IMR-90 (cell line): ENCODE measurements at regions of chr2 and their contacts with region 1.

Region 1: DNA sequence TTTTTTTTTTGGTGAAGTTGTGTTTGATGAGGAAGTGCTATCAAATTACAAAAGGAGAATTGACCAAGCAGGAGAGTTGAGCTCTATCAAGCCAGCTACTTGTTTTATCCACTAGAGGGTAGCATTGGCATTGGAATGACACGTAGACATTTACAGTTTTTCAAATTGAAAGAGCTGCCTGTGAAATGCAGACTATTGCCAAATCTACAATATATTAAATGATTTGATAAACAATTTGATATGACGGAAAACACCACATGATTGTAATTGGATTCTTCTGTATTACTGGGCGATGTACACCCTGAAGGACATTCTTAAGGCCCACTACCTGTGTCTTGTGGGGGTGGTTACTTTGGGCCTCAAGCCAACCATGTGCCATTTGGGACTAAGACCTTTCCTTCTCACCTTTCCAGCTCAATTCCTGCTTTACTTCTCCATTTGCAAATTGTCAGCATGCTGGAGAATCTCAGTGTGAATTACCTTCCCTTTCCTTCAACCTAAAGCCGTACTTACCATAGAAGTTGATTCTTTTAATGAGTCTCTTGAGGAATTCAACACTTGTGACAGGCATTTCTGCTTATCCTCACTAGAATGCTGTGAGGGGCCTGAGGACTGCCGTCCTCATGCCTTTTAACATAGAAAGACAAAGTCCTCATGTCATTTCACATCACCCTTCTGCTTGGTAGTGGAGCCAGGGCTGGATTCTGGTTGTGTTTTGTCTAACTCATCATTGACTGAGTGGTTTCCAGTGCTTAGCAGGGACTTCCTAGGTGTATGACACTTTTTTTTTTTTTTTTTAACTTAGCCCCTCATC is 134.8 kb upstream of the THUMPD2 start:
- DNase-seq: peak; percentile 88
- ATAC-seq: peak; percentile 85
- H3K4me3 ChIP-seq: no peak overlapping the region
- H3K27ac ChIP-seq: peak overlapping the region; percentile 94
- H3K4me1 ChIP-seq: peaks cover 5% of the 10 kb centered on the region
- H3K27me3 ChIP-seq: no peaks in the 10 kb centered on the region
- CTCF ChIP-seq: peak; percentile 90
- POLR2A ChIP-seq: 0 out of 2 replicates have a peak, but pooled peaks have one; percentile 37
- RAD21 ChIP-seq: peak; percentile 99

Region 2: GRCh38 chr2:40127890-40128557 is 214.2 kb after region 1 on chr2:
- CTCF ChIA-PET with region 1: no interaction called
- POLR2A ChIA-PET with region 1: no interaction called
- dilution Hi-C with region 1: no loop called
- in situ Hi-C with region 1: no loop called
- intact Hi-C with region 1: loop called (anchors 1 kb)
- DNase-seq: peak; percentile 97
- ATAC-seq: peak; percentile 79
- H3K4me3 ChIP-seq: no peak overlapping the region
- H3K27ac ChIP-seq: peak overlapping the region; percentile 97
- H3K4me1 ChIP-seq: peaks cover 43% of the 10 kb centered on the region
- H3K27me3 ChIP-seq: no peaks in the 10 kb centered on the region
- CTCF ChIP-seq: no peak
- POLR2A ChIP-seq: no peak
- RAD21 ChIP-seq: peak; percentile 14; the same call in 1 of the 2 replicates

Region 3: GRCh38 chr2:40332191-40332826 is 418.5 kb after region 1 on chr2:
- CTCF ChIA-PET with region 1: no interaction called
- POLR2A ChIA-PET with region 1: no interaction called
- dilution Hi-C with region 1: no loop called
- in situ Hi-C with region 1: no loop called
- intact Hi-C with region 1: no loop called
- DNase-seq: peak; percentile 86
- ATAC-seq: peak; percentile 84
- H3K4me3 ChIP-seq: no peak overlapping the region
- H3K27ac ChIP-seq: peak overlapping the region; percentile 46; the same call in 1 of the 2 replicates
- H3K4me1 ChIP-seq: peaks cover 3% of the 10 kb centered on the region; the same call in 1 of the 2 replicates
- H3K27me3 ChIP-seq: no peaks in the 10 kb centered on the region
- CTCF ChIP-seq: no peak
- POLR2A ChIP-seq: no peak
- RAD21 ChIP-seq: no peak

Region 4: GRCh38 chr2:40363631-40364030 is 449.8 kb after region 1 on chr2:
- CTCF ChIA-PET with region 1: no interaction called
- POLR2A ChIA-PET with region 1: no interaction called
- dilution Hi-C with region 1: no loop called
- in situ Hi-C with region 1: no loop called
- intact Hi-C with region 1: loop called (anchors 5 kb)
- DNase-seq: peak; percentile 40
- ATAC-seq: no peak
- H3K4me3 ChIP-seq: peak overlapping the region; percentile 3; the same call in 1 of the 2 replicates
- H3K27ac ChIP-seq: peak overlapping the region; percentile 69; the same call in 1 of the 2 replicates
- H3K4me1 ChIP-seq: peaks cover 15% of the 10 kb centered on the region
- H3K27me3 ChIP-seq: no peaks in the 10 kb centered on the region
- CTCF ChIP-seq: no peak
- POLR2A ChIP-seq: no peak
- RAD21 ChIP-seq: no peak

Region 5: GRCh38 chr2:40760071-40760666 is 846.3 kb after region 1 on chr2:
- CTCF ChIA-PET with region 1: no interaction called
- POLR2A ChIA-PET with region 1: no interaction called
- dilution Hi-C with region 1: no loop called
- in situ Hi-C with region 1: loop called (anchors 5 kb)
- intact Hi-C with region 1: loop called (anchors 1 kb)
- DNase-seq: peak; percentile 69
- ATAC-seq: peak; percentile 99
- H3K4me3 ChIP-seq: no peak overlapping the region
- H3K27ac ChIP-seq: no peak overlapping the region
- H3K4me1 ChIP-seq: no peaks in the 10 kb centered on the region
- H3K27me3 ChIP-seq: no peaks in the 10 kb centered on the region
- CTCF ChIP-seq: peak; percentile 97
- POLR2A ChIP-seq: no peak
- RAD21 ChIP-seq: peak; percentile 98

Region 6: DNA sequence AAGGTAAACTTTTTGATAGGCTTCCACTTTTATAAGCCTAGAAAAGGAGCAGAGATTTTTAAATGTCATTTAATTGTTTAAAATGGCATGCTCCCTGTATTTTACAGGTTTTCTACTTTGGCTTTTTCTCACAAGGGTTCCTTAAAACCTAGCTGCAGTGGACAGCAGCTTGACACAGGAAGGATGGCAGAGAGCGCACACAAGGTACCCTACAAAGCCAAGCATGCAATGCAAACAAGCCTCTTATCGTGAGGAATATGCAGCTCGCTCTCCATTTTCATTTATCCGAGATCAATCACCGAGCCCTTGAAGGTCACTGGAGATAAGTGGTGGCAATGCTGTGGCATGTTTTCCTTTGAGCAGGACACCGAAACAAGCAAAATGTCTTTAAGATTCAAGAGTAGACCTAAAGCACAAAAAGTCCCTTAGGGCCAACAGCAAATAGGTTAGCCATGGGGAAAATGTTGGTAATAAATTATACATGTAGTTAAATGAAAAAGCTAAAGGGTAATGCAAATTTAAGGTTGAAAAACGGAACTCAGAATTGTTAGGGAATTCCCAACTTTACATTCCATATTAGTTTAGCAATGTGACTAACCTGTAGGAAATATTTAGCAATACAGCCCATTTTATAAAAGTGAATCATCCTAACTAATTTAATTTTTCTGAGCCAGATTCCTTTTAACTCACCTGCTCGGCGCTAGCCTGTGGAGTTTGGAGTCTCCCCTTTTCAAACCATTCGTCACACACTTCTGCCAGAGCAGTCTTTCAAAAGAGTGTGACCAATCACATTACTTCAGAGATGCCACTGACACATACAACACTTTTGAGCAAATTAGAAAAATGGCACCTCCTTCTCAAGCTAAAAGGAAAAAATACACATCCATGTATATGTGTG is 1796.1 kb after region 1 on chr2:
- CTCF ChIA-PET with region 1: no interaction called
- POLR2A ChIA-PET with region 1: no interaction called
- dilution Hi-C with region 1: no loop called
- in situ Hi-C with region 1: loop called (anchors 25 kb)
- intact Hi-C with region 1: loop called (anchors 5 kb)
- DNase-seq: no peak
- ATAC-seq: no peak
- H3K4me3 ChIP-seq: no peak overlapping the region
- H3K27ac ChIP-seq: no peak overlapping the region
- H3K4me1 ChIP-seq: peaks cover 4% of the 10 kb centered on the region; the same call in 1 of the 2 replicates
- H3K27me3 ChIP-seq: no peaks in the 10 kb centered on the region; the same call in 1 of the 2 replicates
- CTCF ChIP-seq: no peak
- POLR2A ChIP-seq: no peak
- RAD21 ChIP-seq: no peak